Activated CD8-positive, alpha-beta T cell treated with anti-CD3 and anti-CD28 coated beads, Interleukin-2, amount 10 ng/mL, durations not matched to agents 7 days and 5 days (primary cell): ENCODE measurements at regions of chr19 and their contacts with region 1.

Region 1: DNA sequence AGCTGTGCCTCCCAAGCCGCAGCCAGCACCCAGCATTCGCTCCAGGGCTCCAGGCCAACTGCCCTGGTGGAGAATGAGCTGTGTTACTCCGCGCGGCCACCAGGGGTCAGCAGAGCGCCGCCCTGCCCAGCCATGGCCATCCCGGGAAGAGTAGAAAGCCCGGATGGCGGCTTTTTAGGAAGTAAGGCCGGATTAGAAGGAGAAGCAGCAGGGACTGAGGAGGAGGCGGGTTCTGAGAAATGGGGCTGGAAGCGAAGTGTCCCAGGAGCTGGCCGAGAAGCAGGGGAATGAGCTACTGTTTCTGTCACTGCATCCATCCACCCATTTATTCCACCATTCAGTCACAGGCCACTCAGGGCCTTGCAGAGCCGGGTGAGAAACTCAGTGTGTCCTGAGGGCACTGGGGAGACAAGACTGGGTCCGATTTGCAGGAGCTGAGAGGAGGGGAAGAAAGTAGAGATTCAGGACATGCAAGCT is 6.6 kb upstream of the NPAS1 start:
- DNase-seq: peak; percentile 66
- ATAC-seq: peak; percentile 81
- H3K4me3 Mint-ChIP-seq: no peak overlapping the region
- H3K27ac Mint-ChIP-seq: peak overlapping the region; percentile 10
- H3K4me1 Mint-ChIP-seq: peaks cover 10% of the 10 kb centered on the region
- H3K27me3 Mint-ChIP-seq: peaks cover 8% of the 10 kb centered on the region

Region 2: DNA sequence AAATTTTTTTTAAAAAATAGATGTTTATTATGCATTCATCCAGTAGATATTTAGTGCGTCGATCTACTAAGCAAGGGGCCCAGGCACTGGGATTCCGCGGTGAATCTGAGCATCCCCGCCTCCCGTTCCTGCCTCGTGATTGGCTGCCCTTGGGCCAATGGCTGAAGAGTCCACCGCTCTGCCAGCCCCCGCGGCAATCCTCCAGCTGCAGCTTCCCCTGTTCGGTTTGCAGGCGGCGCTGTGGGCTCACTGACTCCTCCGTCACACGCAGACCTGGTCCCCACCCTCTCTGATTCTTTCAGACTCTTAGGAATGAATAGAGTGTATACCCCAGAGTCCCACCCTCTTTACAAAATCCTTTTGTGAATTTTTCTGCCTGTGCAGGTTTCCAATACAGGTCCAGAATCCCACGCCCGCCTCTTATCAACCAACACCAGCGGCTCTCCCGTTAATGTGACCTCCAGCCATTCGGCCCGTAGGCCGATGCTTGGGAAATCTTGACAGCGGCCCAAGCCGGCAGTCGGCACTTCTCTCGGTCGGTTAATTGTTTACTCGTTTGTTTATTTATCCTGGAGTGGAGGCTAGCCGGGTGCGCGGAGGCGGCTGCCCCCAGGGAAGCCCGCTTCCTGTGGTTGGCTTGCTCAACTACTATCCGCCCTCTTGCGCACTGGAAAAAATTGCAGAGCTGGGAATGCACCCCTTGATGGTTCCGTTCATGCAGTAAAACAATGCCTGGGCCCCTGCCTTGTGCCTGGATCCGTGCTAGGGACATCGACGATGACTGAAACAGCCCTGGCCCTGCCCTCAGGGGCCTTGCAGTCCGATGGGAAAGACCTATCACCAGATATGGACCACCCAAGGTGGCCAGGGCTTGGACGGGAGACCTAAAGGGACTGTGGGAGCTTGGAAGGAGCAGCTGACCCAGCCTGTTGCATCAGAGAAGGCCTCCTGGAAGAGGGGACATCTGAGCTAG is 156.7 kb before region 1 on chr19:
- CTCF ChIA-PET with region 1: interaction called, 29 read pairs
- POLR2A ChIA-PET with region 1: no interaction called
- DNase-seq: peak; percentile 95
- ATAC-seq: peak; percentile 64
- H3K4me3 Mint-ChIP-seq: peak overlapping the region; percentile 73
- H3K27ac Mint-ChIP-seq: peak overlapping the region; percentile 80
- H3K4me1 Mint-ChIP-seq: peaks cover 28% of the 10 kb centered on the region
- H3K27me3 Mint-ChIP-seq: peaks cover 7% of the 10 kb centered on the region

Region 3: DNA sequence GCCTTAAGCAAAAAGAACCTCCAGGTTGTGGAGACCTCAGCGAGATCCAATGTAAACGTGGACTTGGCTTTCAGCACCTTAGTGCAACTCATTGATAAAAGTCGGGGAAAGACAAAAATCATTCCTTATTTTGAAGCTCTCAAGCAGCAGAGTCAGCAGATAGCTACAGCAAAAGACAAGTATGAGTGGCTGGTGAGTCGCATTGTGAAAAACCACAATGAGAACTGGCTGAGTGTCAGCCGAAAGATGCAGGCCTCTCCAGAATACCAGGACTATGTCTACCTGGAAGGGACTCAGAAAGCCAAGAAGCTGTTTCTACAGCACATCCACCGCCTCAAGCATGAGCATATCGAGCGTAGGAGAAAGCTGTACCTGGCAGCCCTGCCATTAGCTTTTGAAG is 93.8 kb before region 1 on chr19:
- CTCF ChIA-PET with region 1: interaction called, 13 read pairs
- POLR2A ChIA-PET with region 1: no interaction called
- DNase-seq: no peak
- ATAC-seq: no peak
- H3K4me3 Mint-ChIP-seq: no peak overlapping the region
- H3K27ac Mint-ChIP-seq: no peak overlapping the region
- H3K4me1 Mint-ChIP-seq: peaks cover 20% of the 10 kb centered on the region
- H3K27me3 Mint-ChIP-seq: no peaks in the 10 kb centered on the region

Region 4: GRCh38 chr19:46990991-46991676 is 21.9 kb before region 1 on chr19:
- CTCF ChIA-PET with region 1: interaction called, 29 read pairs
- POLR2A ChIA-PET with region 1: no interaction called
- DNase-seq: peak; percentile 63
- ATAC-seq: peak; percentile 68
- H3K4me3 Mint-ChIP-seq: no peak overlapping the region
- H3K27ac Mint-ChIP-seq: peak overlapping the region; percentile 68
- H3K4me1 Mint-ChIP-seq: peaks cover 15% of the 10 kb centered on the region
- H3K27me3 Mint-ChIP-seq: no peaks in the 10 kb centered on the region

Region 5: GRCh38 chr19:47035127-47036096 is 22.3 kb after region 1 on chr19:
- CTCF ChIA-PET with region 1: interaction called, 66 read pairs
- POLR2A ChIA-PET with region 1: no interaction called
- DNase-seq: peak; percentile 96
- ATAC-seq: peak; percentile 95
- H3K4me3 Mint-ChIP-seq: peak overlapping the region; percentile 87
- H3K27ac Mint-ChIP-seq: peak overlapping the region; percentile 80
- H3K4me1 Mint-ChIP-seq: peaks cover 21% of the 10 kb centered on the region
- H3K27me3 Mint-ChIP-seq: peaks cover 16% of the 10 kb centered on the region

Region 6: GRCh38 chr19:47124937-47125668 is 112.0 kb after region 1 on chr19:
- CTCF ChIA-PET with region 1: interaction called, 22 read pairs
- POLR2A ChIA-PET with region 1: no interaction called
- DNase-seq: peak; percentile 30
- ATAC-seq: peak; percentile 60
- H3K4me3 Mint-ChIP-seq: no peak overlapping the region
- H3K27ac Mint-ChIP-seq: no peak overlapping the region
- H3K4me1 Mint-ChIP-seq: peaks cover 13% of the 10 kb centered on the region
- H3K27me3 Mint-ChIP-seq: no peaks in the 10 kb centered on the region

Region 7: GRCh38 chr19:47143322-47144073 is 130.4 kb after region 1 on chr19:
- CTCF ChIA-PET with region 1: interaction called, 12 read pairs
- POLR2A ChIA-PET with region 1: no interaction called
- DNase-seq: no peak
- ATAC-seq: no peak
- H3K4me3 Mint-ChIP-seq: no peak overlapping the region
- H3K27ac Mint-ChIP-seq: peak overlapping the region; percentile 26
- H3K4me1 Mint-ChIP-seq: peaks cover 56% of the 10 kb centered on the region
- H3K27me3 Mint-ChIP-seq: no peaks in the 10 kb centered on the region